ENCODE measurements at regions of chr15 and their contacts with region 1.

Region 1: GRCh38 chr15:99507504-99508310 is 58.1 kb upstream of the MEF2A start:
- DNase-seq: peak; percentile 47
- ATAC-seq: no peak
- H3K4me3 ChIP-seq: peak overlapping the region in 1 of 5 experiments; percentile 5
- H3K4me3 Mint-ChIP-seq: peak overlapping the region; percentile 79
- H3K27ac ChIP-seq: peak overlapping the region; percentile 50 to 90
- H3K27ac Mint-ChIP-seq: peak overlapping the region; percentile 86
- H3K4me1 ChIP-seq: peaks cover 87 to 88% of the 10 kb centered on the region in 2 donors
- H3K4me1 Mint-ChIP-seq: peaks cover 91% of the 10 kb centered on the region
- H3K27me3 ChIP-seq: no peaks in the 10 kb centered on the region
- H3K27me3 Mint-ChIP-seq: no peaks in the 10 kb centered on the region
- CTCF ChIP-seq: no peak

Region 2: DNA sequence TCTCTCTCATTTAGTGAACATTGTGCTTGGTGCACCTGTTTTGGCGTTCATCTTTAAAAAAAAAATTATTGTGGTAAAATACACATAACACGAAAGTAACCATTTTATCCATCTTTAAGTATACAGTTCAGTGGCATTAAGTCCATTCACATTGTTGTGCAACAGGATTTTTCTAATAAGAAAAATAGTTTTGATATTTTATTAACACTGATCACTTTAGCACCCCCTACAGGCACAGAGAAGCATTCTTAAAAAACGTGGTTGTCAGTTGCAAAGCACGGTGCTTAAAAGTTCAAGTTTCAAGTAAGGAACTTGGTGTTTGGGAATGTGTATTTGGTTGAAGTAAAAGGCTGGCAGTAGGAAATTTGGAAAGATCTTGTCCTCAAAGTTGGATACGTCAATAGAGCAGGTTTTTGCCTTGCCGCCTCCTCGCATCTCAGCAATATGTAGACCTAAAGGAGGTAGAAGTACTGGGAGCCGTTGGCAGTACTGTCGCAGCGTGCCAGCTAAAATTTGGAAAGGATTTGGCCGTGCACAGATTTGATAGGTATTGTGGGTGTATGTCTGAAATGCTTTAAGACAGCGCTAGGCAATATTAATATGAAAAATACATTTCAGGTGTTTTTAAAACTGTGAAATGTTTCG is 146.0 kb before region 1 on chr15:
- CTCF ChIA-PET with region 1: no interaction called
- POLR2A ChIA-PET with region 1: no interaction called
- intact Hi-C with region 1: no loop called
- DNase-seq: no peak
- ATAC-seq: no peak
- H3K4me3 ChIP-seq: no peak overlapping the region
- H3K4me3 Mint-ChIP-seq: no peak overlapping the region
- H3K27ac ChIP-seq: no peak overlapping the region
- H3K27ac Mint-ChIP-seq: no peak overlapping the region
- H3K4me1 ChIP-seq: peaks cover 12 to 13% of the 10 kb centered on the region in 2 donors
- H3K4me1 Mint-ChIP-seq: peaks cover 20% of the 10 kb centered on the region
- H3K27me3 ChIP-seq: no peaks in the 10 kb centered on the region
- H3K27me3 Mint-ChIP-seq: no peaks in the 10 kb centered on the region
- CTCF ChIP-seq: peak; percentile 47

Region 3: DNA sequence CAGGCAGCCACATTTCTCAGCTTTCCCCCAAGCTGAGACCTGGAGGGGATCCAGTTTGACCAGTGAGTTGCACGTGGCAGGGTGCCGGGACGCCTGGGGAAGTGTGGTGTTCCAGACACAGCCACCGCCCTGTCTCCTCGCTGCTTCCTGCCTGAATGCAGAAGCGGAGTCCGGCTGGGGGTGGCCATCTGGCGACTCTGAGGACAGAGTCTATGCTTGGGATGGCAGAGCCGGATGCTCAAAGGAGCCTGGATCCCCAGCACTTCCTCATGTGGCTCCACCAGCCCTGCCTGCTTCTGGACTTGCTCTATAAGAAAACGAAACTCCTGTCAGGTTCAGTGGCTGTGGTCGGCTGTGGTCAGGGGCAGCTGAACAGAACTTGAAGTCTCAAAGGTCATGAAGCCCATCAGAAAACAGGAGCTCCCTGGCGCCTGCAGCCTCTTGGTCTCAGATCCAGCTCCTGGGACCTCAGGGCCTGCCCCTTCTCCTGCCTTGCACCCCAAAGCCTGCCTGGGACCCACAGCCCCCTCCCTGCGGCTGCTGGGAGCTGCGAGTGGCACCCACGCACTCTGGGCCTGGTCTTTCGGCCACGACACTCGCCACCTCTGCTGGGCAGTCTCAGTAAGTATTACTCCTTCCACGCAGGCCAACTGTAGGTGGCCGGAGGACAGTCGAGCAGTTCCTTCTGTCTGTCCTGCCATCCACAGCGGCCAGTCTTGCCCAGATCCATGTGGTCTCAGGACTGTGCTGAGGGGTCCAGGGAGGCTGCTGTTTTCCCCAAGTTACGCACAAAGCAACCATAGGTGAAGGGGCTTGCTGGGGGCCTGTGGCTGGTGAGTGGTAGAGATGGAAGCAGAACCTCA is 54.7 kb before region 1 on chr15:
- CTCF ChIA-PET with region 1: no interaction called
- POLR2A ChIA-PET with region 1: no interaction called
- intact Hi-C with region 1: loop called (anchors 5 kb)
- DNase-seq: peak; percentile 57
- ATAC-seq: peak; percentile 80
- H3K4me3 ChIP-seq: peak overlapping the region in 4 of 5 experiments; percentile 24 to 49 (median 44)
- H3K4me3 Mint-ChIP-seq: peak overlapping the region; percentile 75
- H3K27ac ChIP-seq: peak overlapping the region in 1 of 2 donors; percentile 13
- H3K27ac Mint-ChIP-seq: peak overlapping the region; percentile 50
- H3K4me1 ChIP-seq: peaks cover 31 to 44% of the 10 kb centered on the region in 2 donors
- H3K4me1 Mint-ChIP-seq: peaks cover 46% of the 10 kb centered on the region
- H3K27me3 ChIP-seq: no peaks in the 10 kb centered on the region
- H3K27me3 Mint-ChIP-seq: no peaks in the 10 kb centered on the region
- CTCF ChIP-seq: no peak

Region 4: DNA sequence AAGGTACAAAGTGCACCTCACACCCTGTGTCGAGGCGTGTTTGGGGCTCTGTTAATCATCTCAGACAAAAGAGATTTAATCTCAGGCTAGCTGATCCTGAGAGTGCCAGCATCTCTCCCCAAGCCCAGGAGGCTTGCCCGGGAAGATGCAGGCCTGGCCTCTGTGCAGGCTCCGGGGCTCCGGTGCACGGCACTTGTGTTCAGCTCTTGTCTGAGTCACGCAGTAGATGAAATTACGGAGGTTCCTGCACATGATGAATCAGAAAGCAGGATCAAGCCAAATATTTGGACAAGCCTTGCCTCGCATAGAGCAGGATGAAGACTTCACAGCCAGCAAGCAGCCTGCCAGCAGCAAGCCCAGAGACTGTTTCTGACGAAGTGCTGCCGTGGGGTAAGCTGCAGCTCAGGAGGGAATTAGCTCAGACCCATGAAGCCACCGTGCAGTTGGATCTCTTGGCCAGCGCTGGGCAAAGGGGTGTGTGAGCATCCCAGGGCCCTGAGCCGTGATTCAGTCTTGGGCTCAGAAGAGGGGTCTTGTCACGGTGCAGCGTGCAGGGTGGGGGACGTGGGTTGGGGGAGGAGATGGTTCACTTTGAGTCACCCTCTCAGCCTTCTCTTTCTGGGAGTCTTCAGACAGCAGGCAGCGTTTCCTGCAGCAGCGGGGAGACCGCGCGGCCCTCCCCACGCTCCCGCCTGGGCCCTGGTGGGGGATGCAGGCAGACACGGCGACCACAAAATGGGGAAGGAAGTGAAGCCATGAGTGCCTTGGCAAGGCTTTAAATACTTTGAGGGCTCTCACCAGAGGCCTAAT is 31.1 kb before region 1 on chr15:
- CTCF ChIA-PET with region 1: interaction called, 21 read pairs
- POLR2A ChIA-PET with region 1: no interaction called
- intact Hi-C with region 1: loop called (anchors 2 kb)
- DNase-seq: peak; percentile 78
- ATAC-seq: peak; percentile 83
- H3K4me3 ChIP-seq: no peak overlapping the region
- H3K4me3 Mint-ChIP-seq: peak overlapping the region; percentile 77
- H3K27ac ChIP-seq: no peak overlapping the region
- H3K27ac Mint-ChIP-seq: peak overlapping the region; percentile 78
- H3K4me1 ChIP-seq: peaks cover 45 to 52% of the 10 kb centered on the region in 2 donors
- H3K4me1 Mint-ChIP-seq: peaks cover 59% of the 10 kb centered on the region
- H3K27me3 ChIP-seq: no peaks in the 10 kb centered on the region
- H3K27me3 Mint-ChIP-seq: no peaks in the 10 kb centered on the region
- CTCF ChIP-seq: no peak

Measured in B cell (primary cell).